Heart right ventricle (tissue), 16 donors: ENCODE measurements at regions of chr11 and their contacts with region 1.

Region 1: GRCh38 chr11:57667736-57668435 is at the start of gene ZDHHC5:
- DNase-seq: peak; percentile 99
- ATAC-seq: peak; percentile 94 to 97 (median 97)
- H3K4me3 ChIP-seq: peak within 1 kb of the TSS; percentile 75 to 100 (median 82)
- H3K27ac ChIP-seq: peak within 1 kb of the TSS; percentile 87 to 99 (median 97)
- H3K4me1 ChIP-seq: peaks cover 0 to 43% (median 27%) of the 10 kb centered on the region in 9 donors
- H3K27me3 ChIP-seq: no peaks in the 10 kb centered on the region
- CTCF ChIP-seq: peak; percentile 3 to 76 (median 62)
- total RNA-seq, gene ZDHHC5: 32.6 to 56.5 (median 41.6) TPM

Region 2: DNA sequence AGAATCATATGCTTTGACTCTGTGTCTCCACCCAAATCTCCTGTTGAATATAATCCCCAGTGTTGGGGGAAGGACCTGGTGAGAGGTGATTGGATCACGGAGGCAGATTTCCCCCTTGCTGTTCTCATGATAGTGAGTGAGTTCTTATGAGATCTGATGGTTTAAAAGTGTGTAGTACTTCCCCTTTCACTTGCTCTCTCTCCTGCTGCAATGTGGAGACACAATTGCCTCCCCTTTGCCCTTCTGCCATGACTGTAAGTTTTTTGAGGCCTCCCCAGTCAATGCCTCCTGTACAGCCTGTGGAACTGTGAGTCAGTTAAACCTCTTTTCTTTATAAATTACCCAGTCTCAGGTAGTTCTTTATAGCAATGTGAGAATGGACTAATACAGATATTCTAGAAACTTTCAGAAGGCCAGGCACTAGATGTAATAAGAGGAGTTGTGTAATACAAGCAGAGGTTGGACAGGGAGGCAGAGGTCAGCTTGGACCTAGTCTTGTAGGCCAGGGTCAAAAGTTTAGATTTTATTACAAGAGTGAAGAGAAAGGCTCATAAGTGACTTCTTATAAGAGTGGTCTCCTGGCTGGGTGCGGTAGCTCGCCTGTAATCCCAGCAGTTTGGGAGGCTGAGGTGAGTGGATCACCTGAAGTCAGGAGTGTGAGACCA is 79.7 kb before region 1 on chr11:
- intact Hi-C with region 1: no loop called
- DNase-seq: no peak
- ATAC-seq: no peak
- H3K4me3 ChIP-seq: no peak overlapping the region
- H3K27ac ChIP-seq: no peak overlapping the region
- H3K4me1 ChIP-seq: no peaks in the 10 kb centered on the region
- H3K27me3 ChIP-seq: no peaks in the 10 kb centered on the region
- CTCF ChIP-seq: no peak

Region 3: GRCh38 chr11:57657194-57658022 is 10.5 kb before region 1 on chr11 and contains the start of gene CLP1:
- intact Hi-C with region 1: loop called in 3 of 10 experiments (anchors 1 kb)
- DNase-seq: peak; percentile 99 to 100
- ATAC-seq: peak; percentile 99
- H3K4me3 ChIP-seq: peak within 1 kb of the TSS; percentile 27 to 88 (median 69)
- H3K27ac ChIP-seq: peak within 1 kb of the TSS; percentile 14 to 97 (median 86)
- H3K4me1 ChIP-seq: peaks cover 3 to 40% (median 18%) of the 10 kb centered on the region in 9 donors
- H3K27me3 ChIP-seq: peaks cover 0 to under 1% (median 0%) of the 10 kb centered on the region in 7 donors
- CTCF ChIP-seq: no peak
- total RNA-seq, gene CLP1: 4.0 to 9.0 (median 7.1) TPM